OCI-LY7 (cell line): ENCODE measurements at regions of chr10 and their contacts with region 1.

Region 1: DNA sequence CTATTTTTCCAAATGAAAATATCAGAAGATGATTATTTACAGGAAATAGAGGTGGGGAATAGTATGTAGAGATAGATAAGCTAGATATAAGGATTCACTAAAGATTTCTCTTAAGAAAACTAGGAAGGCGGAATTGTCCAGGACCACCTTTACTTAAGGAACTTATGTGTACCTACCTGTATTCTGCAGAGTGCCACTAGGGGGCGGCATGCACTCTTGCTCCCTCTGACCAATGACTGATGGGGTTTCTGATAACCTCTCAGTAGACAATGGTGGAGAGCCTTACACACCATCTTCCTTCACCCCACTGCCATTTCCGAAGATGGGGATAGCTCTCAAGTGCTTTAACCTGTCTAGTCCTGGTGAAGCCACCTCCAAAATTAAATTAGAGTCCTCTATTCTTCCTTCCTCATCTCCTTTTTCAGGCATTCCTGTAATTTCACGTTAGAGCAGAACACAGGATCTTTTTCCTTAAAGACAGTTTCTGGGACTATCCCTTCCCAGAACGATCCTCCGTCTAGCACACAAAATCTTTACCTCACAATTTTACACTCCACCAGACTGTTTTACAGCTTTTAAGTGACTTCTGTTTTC is 453.1 kb downstream of the SORCS1 start:
- DNase-seq: peak; percentile 49
- H3K4me3 ChIP-seq: no peak overlapping the region
- H3K27ac ChIP-seq: no peak overlapping the region
- H3K4me1 ChIP-seq: no peaks in the 10 kb centered on the region
- CTCF ChIP-seq: peak; percentile 93

Region 2: DNA sequence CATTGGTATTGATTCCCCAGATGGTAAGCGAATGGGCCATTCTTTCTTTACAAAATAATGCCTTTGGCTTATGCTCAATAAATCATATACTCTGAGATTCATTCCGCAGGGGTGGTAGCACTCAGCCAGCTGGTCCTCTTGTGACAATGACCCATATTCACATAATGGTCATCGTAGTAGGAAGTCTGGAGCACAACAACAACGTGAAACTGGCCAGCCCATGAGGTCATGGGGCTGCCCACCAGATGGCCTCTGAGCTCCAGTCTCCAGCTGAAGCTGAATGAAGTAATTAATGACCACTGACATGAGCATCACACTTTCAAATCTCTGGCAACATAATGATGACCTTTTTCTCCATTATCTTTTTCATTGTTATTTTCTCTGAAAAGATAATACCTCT is 495.4 kb after region 1 on chr10:
- CTCF ChIA-PET with region 1: no interaction called
- POLR2A ChIA-PET with region 1: no interaction called
- intact Hi-C with region 1: no loop called
- DNase-seq: no peak
- H3K4me3 ChIP-seq: no peak overlapping the region
- H3K27ac ChIP-seq: no peak overlapping the region
- H3K4me1 ChIP-seq: no peaks in the 10 kb centered on the region
- CTCF ChIP-seq: no peak

Region 3: DNA sequence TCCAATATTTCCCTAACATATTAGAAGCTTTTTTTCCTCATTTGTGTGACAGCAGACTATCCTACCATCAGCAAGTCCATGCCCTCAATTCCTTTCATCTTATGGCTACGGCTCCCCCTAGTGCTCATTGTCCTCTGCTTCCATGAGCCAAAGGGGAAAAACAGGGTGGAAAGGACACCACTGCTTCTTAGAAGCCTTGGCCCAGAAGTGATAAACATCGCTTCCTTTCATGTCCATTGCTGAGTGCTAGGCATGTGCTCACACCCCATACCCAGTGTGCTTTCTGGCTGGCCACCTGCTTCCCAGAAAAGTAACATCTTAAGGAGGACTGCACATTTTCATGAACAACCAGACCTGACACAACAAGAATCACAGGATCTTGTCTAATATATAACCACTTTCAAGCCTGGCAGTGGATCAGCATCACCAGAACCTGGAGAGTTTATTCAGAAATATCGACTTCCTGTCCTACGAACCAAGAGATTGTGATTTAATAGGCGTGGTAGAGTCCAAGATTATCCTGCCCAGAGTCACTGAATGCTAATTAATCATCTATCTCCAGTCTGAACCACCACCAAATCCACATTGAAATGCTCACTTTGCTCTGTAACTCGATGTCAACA is 1103.6 kb after region 1 on chr10:
- CTCF ChIA-PET with region 1: no interaction called
- POLR2A ChIA-PET with region 1: no interaction called
- intact Hi-C with region 1: loop called (anchors 5 kb)
- DNase-seq: peak; percentile 16
- H3K4me3 ChIP-seq: no peak overlapping the region
- H3K27ac ChIP-seq: no peak overlapping the region
- H3K4me1 ChIP-seq: no peaks in the 10 kb centered on the region
- CTCF ChIP-seq: peak; percentile 71